CD4-positive, alpha-beta T cell (primary cell): ENCODE measurements at regions of chr6 and their contacts with region 1.

Region 1: DNA sequence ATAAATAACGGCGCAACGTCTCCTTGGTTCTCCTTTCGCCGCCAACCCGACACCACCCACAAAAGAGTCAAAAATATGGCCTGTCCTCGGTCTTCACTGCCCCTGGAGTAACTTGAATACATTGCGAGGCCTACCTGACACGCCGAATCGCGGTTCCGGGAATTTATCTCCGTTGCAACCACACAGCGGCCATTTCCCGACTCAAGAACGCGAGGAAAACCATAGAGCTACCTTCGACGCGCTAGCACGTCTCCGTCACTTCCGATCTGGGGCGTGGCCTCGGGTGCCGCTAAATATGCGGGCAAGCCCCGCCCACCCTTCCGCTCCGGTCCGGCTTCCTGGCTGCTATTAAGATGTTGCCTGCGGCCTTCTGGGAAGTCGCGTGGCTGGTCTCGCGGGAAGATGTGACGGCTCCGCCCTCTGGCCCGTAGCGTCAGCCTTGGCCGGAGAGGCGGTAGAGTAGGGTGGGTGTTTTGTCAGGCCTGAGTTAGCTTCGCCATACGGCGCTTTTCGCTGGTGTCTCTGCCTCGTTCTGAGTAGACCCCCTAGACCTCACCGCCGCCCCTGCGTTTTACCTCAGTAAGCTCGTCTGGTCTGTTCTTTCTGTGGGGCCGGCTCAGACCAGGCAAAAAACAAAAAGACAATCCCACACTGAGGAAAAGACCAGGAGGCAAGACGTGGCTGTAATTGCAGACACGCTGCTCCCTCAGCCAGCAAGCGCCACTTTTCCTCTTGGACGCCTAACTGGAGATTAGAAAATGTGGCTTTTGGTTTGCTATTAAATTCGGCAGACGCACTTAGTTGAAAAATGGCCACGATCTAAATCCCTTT is at the start of gene BCLAF1:
- DNase-seq: peak; percentile 99 to 100 (median 99)
- ATAC-seq: peak; percentile 70
- H3K4me3 ChIP-seq: peak within 1 kb of the TSS; percentile 88
- H3K4me3 Mint-ChIP-seq: peak within 1 kb of the TSS; percentile 97
- H3K27ac ChIP-seq: peak within 1 kb of the TSS; percentile 100
- H3K27ac Mint-ChIP-seq: peak within 1 kb of the TSS; percentile 99
- H3K4me1 ChIP-seq: peaks cover 52% of the 10 kb centered on the region
- H3K4me1 Mint-ChIP-seq: peaks cover 47% of the 10 kb centered on the region
- H3K27me3 ChIP-seq: no peaks in the 10 kb centered on the region
- H3K27me3 Mint-ChIP-seq: peaks cover 3% of the 10 kb centered on the region
- CTCF ChIP-seq: peak; percentile 7
- total RNA-seq, gene BCLAF1: 484 to 501 TPM

Region 2: GRCh38 chr6:135105710-135106109 is 1184.1 kb before region 1 on chr6:
- CTCF ChIA-PET with region 1: no interaction called
- POLR2A ChIA-PET with region 1: interaction called, 10 read pairs
- intact Hi-C with region 1: no loop called
- DNase-seq: no peak
- ATAC-seq: no peak
- H3K4me3 ChIP-seq: no peak overlapping the region
- H3K4me3 Mint-ChIP-seq: no peak overlapping the region
- H3K27ac ChIP-seq: no peak overlapping the region
- H3K27ac Mint-ChIP-seq: peak overlapping the region; percentile 89
- H3K4me1 ChIP-seq: peaks cover 24% of the 10 kb centered on the region
- H3K4me1 Mint-ChIP-seq: peaks cover 66% of the 10 kb centered on the region
- H3K27me3 ChIP-seq: no peaks in the 10 kb centered on the region
- H3K27me3 Mint-ChIP-seq: no peaks in the 10 kb centered on the region
- CTCF ChIP-seq: no peak

Region 3: DNA sequence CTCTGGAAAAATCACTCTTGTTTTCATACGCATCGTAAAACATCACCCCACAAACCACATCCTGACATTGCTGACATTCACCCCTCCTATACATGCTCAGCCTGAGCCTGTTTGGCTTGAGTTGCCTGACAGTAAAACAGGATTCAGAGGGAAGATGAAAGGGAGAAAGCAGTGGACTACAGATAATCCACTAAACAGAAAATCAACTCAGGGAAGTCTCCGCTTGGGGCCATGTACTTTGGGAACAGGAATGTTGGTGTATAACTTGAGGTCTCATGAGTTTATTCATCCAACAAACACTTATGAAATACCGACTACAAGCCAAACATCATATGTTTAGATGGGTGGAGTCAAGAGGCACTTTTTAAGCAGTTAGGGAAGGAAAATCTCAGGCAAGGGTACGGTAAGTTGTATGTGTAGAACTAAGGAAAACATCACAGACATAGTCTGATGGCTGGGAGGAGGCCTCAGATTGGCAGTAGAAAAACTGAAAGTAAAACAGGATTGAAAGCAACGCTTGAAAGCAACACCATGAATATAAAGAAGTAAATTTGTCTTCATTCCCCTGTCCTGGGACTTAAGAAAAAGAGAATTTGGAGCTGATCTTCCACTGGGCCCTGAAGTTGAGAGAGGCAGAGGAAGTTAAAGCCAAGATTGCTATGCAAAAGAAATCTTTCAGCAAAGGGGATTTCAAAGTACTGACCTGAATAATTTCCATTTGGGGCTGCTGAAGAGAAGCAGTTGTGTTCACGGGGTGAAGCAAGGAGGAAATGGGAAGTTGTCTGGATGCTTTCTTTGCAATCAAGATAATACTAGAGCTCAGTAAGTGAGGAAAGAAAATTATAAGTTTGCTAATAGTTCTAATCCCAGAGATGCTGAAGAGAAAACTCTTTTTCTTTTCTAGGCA is 409.5 kb before region 1 on chr6:
- CTCF ChIA-PET with region 1: no interaction called
- POLR2A ChIA-PET with region 1: interaction called, 17 read pairs
- intact Hi-C with region 1: loop called in 1 of 2 experiments (anchors 10 kb)
- DNase-seq: peak; percentile 9 to 88 (median 42)
- ATAC-seq: peak; percentile 86
- H3K4me3 ChIP-seq: peak overlapping the region; percentile 47
- H3K4me3 Mint-ChIP-seq: peak overlapping the region; percentile 82
- H3K27ac ChIP-seq: peak overlapping the region; percentile 69 to 91
- H3K27ac Mint-ChIP-seq: peak overlapping the region; percentile 94
- H3K4me1 ChIP-seq: peaks cover 12% of the 10 kb centered on the region
- H3K4me1 Mint-ChIP-seq: peaks cover 69% of the 10 kb centered on the region
- H3K27me3 ChIP-seq: no peaks in the 10 kb centered on the region
- H3K27me3 Mint-ChIP-seq: no peaks in the 10 kb centered on the region
- CTCF ChIP-seq: no peak

Region 4: GRCh38 chr6:136216503-136217401 is 73.0 kb before region 1 on chr6:
- CTCF ChIA-PET with region 1: no interaction called
- POLR2A ChIA-PET with region 1: no interaction called
- intact Hi-C with region 1: no loop called
- DNase-seq: no peak
- ATAC-seq: no peak
- H3K4me3 ChIP-seq: no peak overlapping the region
- H3K4me3 Mint-ChIP-seq: no peak overlapping the region
- H3K27ac ChIP-seq: no peak overlapping the region
- H3K27ac Mint-ChIP-seq: no peak overlapping the region
- H3K4me1 ChIP-seq: no peaks in the 10 kb centered on the region
- H3K4me1 Mint-ChIP-seq: no peaks in the 10 kb centered on the region
- H3K27me3 ChIP-seq: no peaks in the 10 kb centered on the region
- H3K27me3 Mint-ChIP-seq: no peaks in the 10 kb centered on the region
- CTCF ChIP-seq: no peak

Region 5: DNA sequence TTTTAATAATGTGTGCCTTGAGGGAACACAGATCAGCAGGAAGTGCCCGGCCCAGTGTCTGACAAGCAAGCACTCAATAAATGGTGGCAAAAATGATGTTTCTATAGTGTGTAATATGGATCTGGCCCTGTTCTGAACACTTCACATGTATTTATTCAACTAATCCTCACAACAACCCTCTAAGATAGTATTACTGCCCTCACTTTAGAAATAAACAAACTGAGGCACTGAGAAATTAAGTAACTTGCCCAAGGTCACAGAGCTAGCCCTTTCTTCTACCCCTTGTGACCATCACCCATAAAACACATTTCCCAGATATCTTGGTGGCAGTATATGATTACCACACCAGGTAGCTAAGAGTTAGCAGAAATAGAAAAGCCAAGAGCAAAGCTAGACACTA is 26.9 kb before region 1 on chr6:
- CTCF ChIA-PET with region 1: no interaction called
- POLR2A ChIA-PET with region 1: interaction called, 12 read pairs
- intact Hi-C with region 1: no loop called
- DNase-seq: no peak
- ATAC-seq: no peak
- H3K4me3 ChIP-seq: no peak overlapping the region
- H3K4me3 Mint-ChIP-seq: no peak overlapping the region
- H3K27ac ChIP-seq: no peak overlapping the region
- H3K27ac Mint-ChIP-seq: peak overlapping the region; percentile 2
- H3K4me1 ChIP-seq: no peaks in the 10 kb centered on the region
- H3K4me1 Mint-ChIP-seq: peaks cover 33% of the 10 kb centered on the region
- H3K27me3 ChIP-seq: no peaks in the 10 kb centered on the region
- H3K27me3 Mint-ChIP-seq: no peaks in the 10 kb centered on the region
- CTCF ChIP-seq: no peak

Region 6: GRCh38 chr6:136306466-136306865 is 16.7 kb after region 1 on chr6:
- CTCF ChIA-PET with region 1: no interaction called
- POLR2A ChIA-PET with region 1: interaction called, 15 read pairs
- intact Hi-C with region 1: no loop called
- DNase-seq: no peak
- ATAC-seq: no peak
- H3K4me3 ChIP-seq: no peak overlapping the region
- H3K4me3 Mint-ChIP-seq: no peak overlapping the region
- H3K27ac ChIP-seq: no peak overlapping the region
- H3K27ac Mint-ChIP-seq: no peak overlapping the region
- H3K4me1 ChIP-seq: no peaks in the 10 kb centered on the region
- H3K4me1 Mint-ChIP-seq: no peaks in the 10 kb centered on the region
- H3K27me3 ChIP-seq: no peaks in the 10 kb centered on the region
- H3K27me3 Mint-ChIP-seq: peaks cover 8% of the 10 kb centered on the region
- CTCF ChIP-seq: no peak

Region 7: GRCh38 chr6:138250513-138251247 is 1960.9 kb after region 1 on chr6:
- CTCF ChIA-PET with region 1: no interaction called
- POLR2A ChIA-PET with region 1: no interaction called
- intact Hi-C with region 1: no loop called
- DNase-seq: no peak
- ATAC-seq: no peak
- H3K4me3 ChIP-seq: no peak overlapping the region
- H3K4me3 Mint-ChIP-seq: no peak overlapping the region
- H3K27ac ChIP-seq: no peak overlapping the region
- H3K27ac Mint-ChIP-seq: no peak overlapping the region
- H3K4me1 ChIP-seq: no peaks in the 10 kb centered on the region
- H3K4me1 Mint-ChIP-seq: no peaks in the 10 kb centered on the region
- H3K27me3 ChIP-seq: peaks cover 0 to 3% of the 10 kb centered on the region in 2 experiments
- H3K27me3 Mint-ChIP-seq: peaks cover 7% of the 10 kb centered on the region
- CTCF ChIP-seq: no peak